ENCODE measurements at regions of chr2 and their contacts with region 1.

Region 1: GRCh38 chr2:33033606-33034081 is 86.9 kb downstream of the LTBP1 start:
- DNase-seq: peak in 1 of 10 donors; percentile 22
- H3K4me3 ChIP-seq: peak overlapping the region in 57 of 59 donors; percentile 1 to 68 (median 47)
- H3K27ac ChIP-seq: peak overlapping the region in 16 of 59 donors; percentile 3 to 79 (median 48)
- H3K27me3 ChIP-seq: no peaks in the 10 kb centered on the region
- CTCF ChIP-seq: peak; percentile 40 to 92 (median 81)

Region 2: GRCh38 chr2:32559136-32559535 is 474.5 kb before region 1 on chr2:
- intact Hi-C with region 1: loop called (anchors 5 to 10 kb)
- DNase-seq: peak in 9 of 10 donors; percentile 11 to 85 (median 72)
- H3K4me3 ChIP-seq: peak overlapping the region in 23 of 59 donors; percentile 0 to 53 (median 17)
- H3K27ac ChIP-seq: peak overlapping the region; percentile 45 to 96 (median 87)
- H3K27me3 ChIP-seq: no peaks in the 10 kb centered on the region
- CTCF ChIP-seq: peak in 2 of 56 donors; percentile 17

Region 3: GRCh38 chr2:32946314-32947075 is 87.1 kb before region 1 on chr2 and contains the start of gene LTBP1:
- intact Hi-C with region 1: loop called in 1 of 2 experiments (anchors 5 kb)
- DNase-seq: peak in 9 of 10 donors; percentile 49 to 84 (median 58)
- H3K4me3 ChIP-seq: peak within 1 kb of the TSS; percentile 48 to 87 (median 72)
- H3K27ac ChIP-seq: peak within 1 kb of the TSS in 46 of 59 donors; percentile 3 to 85 (median 64)
- H3K27me3 ChIP-seq: peaks cover 0 to 7% (median 0%) of the 10 kb centered on the region in 45 donors
- CTCF ChIP-seq: peak in 55 of 56 donors; percentile 28 to 84 (median 69)
- total RNA-seq, gene LTBP1: 6.9 to 47.1 (median 14.7) TPM

Region 4: DNA sequence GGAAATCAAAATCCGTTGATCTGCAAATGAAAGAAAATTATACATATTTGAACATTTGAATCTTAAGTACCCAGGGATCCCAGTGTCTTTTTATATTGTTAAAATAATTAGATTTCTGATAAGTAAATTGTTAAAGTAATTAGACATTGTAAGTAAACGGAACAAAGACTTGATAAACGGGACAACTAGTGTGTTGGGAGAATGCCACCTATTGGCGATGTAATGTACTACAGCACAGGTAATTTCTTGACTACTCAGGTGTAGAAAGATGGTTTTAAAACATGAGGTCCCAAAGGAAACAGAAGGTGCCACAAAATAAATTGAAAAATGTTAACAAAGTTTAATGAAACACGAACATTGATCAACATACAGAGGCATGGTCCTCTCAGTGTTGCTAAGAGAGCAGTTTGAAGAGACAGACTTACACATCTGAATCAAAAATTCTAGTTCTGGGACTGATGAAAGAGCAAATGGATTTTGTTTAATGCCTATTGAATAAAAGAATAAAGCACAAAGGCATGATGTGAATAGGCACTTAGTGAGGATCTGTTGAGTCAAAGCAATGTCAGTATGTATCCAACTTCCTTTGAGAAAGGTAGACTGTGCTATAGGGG is 339.4 kb after region 1 on chr2:
- intact Hi-C with region 1: loop called (anchors 5 kb)
- DNase-seq: no peak
- H3K4me3 ChIP-seq: peak overlapping the region in 3 of 59 donors; percentile 6 to 30 (median 22)
- H3K27ac ChIP-seq: peak overlapping the region in 10 of 59 donors; percentile 8 to 87 (median 80)
- H3K27me3 ChIP-seq: no peaks in the 10 kb centered on the region
- CTCF ChIP-seq: peak; percentile 58 to 87 (median 80)

Region 5: GRCh38 chr2:33441235-33441810 is 407.7 kb after region 1 on chr2:
- intact Hi-C with region 1: loop called (anchors 5 to 10 kb)
- DNase-seq: peak in 8 of 10 donors; percentile 56 to 77 (median 64)
- H3K4me3 ChIP-seq: no peak overlapping the region
- H3K27ac ChIP-seq: peak overlapping the region in 51 of 59 donors; percentile 3 to 93 (median 77)
- H3K27me3 ChIP-seq: no peaks in the 10 kb centered on the region
- CTCF ChIP-seq: peak in 55 of 56 donors; percentile 51 to 88 (median 72)

Measured in dorsolateral prefrontal cortex (tissue), 120 donors.